B cell (primary cell): ENCODE measurements at regions of chr2 and their contacts with region 1.

Region 1: GRCh38 chr2:143162123-143162837 is 33.1 kb downstream of the ARHGAP15 start:
- DNase-seq: peak; percentile 77
- ATAC-seq: peak; percentile 90
- H3K4me3 ChIP-seq: no peak overlapping the region
- H3K4me3 Mint-ChIP-seq: no peak overlapping the region
- H3K27ac ChIP-seq: peak overlapping the region in 1 of 2 donors; percentile 42
- H3K27ac Mint-ChIP-seq: peak overlapping the region; percentile 28
- H3K4me1 ChIP-seq: peaks cover 45 to 56% of the 10 kb centered on the region in 2 donors
- H3K4me1 Mint-ChIP-seq: peaks cover 73% of the 10 kb centered on the region
- H3K27me3 ChIP-seq: no peaks in the 10 kb centered on the region
- H3K27me3 Mint-ChIP-seq: no peaks in the 10 kb centered on the region
- CTCF ChIP-seq: peak; percentile 78

Region 2: GRCh38 chr2:142254031-142254430 is 908.2 kb before region 1 on chr2:
- CTCF ChIA-PET with region 1: no interaction called
- POLR2A ChIA-PET with region 1: no interaction called
- intact Hi-C with region 1: no loop called
- DNase-seq: no peak
- ATAC-seq: no peak
- H3K4me3 ChIP-seq: no peak overlapping the region
- H3K4me3 Mint-ChIP-seq: no peak overlapping the region
- H3K27ac ChIP-seq: no peak overlapping the region
- H3K27ac Mint-ChIP-seq: no peak overlapping the region
- H3K4me1 ChIP-seq: no peaks in the 10 kb centered on the region
- H3K4me1 Mint-ChIP-seq: peaks cover 8% of the 10 kb centered on the region
- H3K27me3 ChIP-seq: peaks cover 0 to 4% (median 0%) of the 10 kb centered on the region in 4 experiments
- H3K27me3 Mint-ChIP-seq: no peaks in the 10 kb centered on the region
- CTCF ChIP-seq: no peak

Region 3: DNA sequence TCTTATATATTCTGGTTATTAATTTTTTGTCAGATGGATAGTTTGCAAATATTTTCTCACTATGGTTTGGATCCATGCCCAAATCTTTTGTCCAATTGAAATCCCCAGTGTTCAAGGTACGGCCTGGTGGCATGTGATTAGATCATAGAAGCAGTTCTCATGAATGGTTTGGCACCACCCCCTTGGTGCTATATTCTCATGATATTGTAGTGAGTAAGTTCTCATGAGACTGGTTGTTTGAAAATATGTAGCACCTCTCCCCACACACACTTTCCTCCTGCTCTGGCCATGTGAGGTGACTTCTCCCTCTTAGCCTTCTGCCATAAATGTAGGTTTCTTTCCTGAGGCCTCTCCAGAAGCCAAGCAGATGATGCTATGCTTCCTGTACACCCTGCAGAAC is 392.5 kb before region 1 on chr2:
- CTCF ChIA-PET with region 1: no interaction called
- POLR2A ChIA-PET with region 1: no interaction called
- intact Hi-C with region 1: no loop called
- DNase-seq: no peak
- ATAC-seq: no peak
- H3K4me3 ChIP-seq: no peak overlapping the region
- H3K4me3 Mint-ChIP-seq: no peak overlapping the region
- H3K27ac ChIP-seq: no peak overlapping the region
- H3K27ac Mint-ChIP-seq: no peak overlapping the region
- H3K4me1 ChIP-seq: no peaks in the 10 kb centered on the region
- H3K4me1 Mint-ChIP-seq: no peaks in the 10 kb centered on the region
- H3K27me3 ChIP-seq: no peaks in the 10 kb centered on the region
- H3K27me3 Mint-ChIP-seq: no peaks in the 10 kb centered on the region
- CTCF ChIP-seq: no peak

Region 4: GRCh38 chr2:143110758-143111428 is 51.4 kb before region 1 on chr2:
- CTCF ChIA-PET with region 1: interaction called, 196 read pairs
- POLR2A ChIA-PET with region 1: no interaction called
- intact Hi-C with region 1: loop called (anchors 1 kb)
- DNase-seq: peak; percentile 84
- ATAC-seq: peak; percentile 86
- H3K4me3 ChIP-seq: no peak overlapping the region
- H3K4me3 Mint-ChIP-seq: no peak overlapping the region
- H3K27ac ChIP-seq: no peak overlapping the region
- H3K27ac Mint-ChIP-seq: peak overlapping the region; percentile 76
- H3K4me1 ChIP-seq: peaks cover 4 to 6% of the 10 kb centered on the region in 2 donors
- H3K4me1 Mint-ChIP-seq: peaks cover 6% of the 10 kb centered on the region
- H3K27me3 ChIP-seq: no peaks in the 10 kb centered on the region
- H3K27me3 Mint-ChIP-seq: no peaks in the 10 kb centered on the region
- CTCF ChIP-seq: peak; percentile 98

Region 5: DNA sequence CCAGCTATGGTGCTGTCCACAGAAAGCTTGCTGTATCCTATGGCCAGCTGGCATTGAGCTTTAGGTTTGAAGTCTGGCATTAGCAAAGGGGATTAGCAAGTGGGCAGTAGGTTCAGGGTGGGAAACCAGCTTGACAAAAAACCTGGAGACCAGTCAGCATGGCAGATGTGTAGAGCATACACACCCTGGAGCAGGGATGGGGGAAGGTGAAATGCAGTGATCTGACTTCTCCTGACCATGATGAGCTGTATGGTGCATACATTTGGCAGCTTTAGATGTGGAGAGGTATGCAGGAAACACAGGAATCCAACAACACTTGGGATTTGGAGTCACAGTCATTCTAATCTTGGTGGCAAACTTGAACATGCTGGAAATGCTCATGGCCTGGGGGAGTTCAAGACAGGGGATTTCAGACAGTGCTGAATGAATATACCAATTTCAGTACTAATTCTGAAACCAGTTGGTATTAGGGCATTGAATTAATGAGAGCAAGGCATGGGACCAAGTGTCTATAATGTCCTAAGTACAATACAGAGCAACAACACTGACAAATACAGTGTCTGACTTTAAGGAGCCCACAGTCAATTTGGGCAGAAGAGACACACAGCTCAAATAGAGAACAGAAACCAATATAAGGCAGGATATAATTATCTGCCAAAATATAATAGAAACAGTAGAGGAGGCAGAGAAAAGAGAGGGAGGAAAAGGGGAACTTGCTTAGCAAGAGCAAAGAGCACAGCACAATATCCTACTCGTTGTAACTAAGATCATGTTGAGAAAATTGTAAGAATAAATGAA is 21.2 kb before region 1 on chr2:
- CTCF ChIA-PET with region 1: interaction called, 18 read pairs
- POLR2A ChIA-PET with region 1: no interaction called
- intact Hi-C with region 1: no loop called
- DNase-seq: peak; percentile 75
- ATAC-seq: peak; percentile 90
- H3K4me3 ChIP-seq: peak overlapping the region in 4 of 5 experiments; percentile 1 to 54 (median 6)
- H3K4me3 Mint-ChIP-seq: peak overlapping the region; percentile 63
- H3K27ac ChIP-seq: peak overlapping the region; percentile 58 to 80
- H3K27ac Mint-ChIP-seq: peak overlapping the region; percentile 88
- H3K4me1 ChIP-seq: peaks cover 59 to 81% of the 10 kb centered on the region in 2 donors
- H3K4me1 Mint-ChIP-seq: peaks cover 88% of the 10 kb centered on the region
- H3K27me3 ChIP-seq: no peaks in the 10 kb centered on the region
- H3K27me3 Mint-ChIP-seq: no peaks in the 10 kb centered on the region
- CTCF ChIP-seq: no peak

Region 6: DNA sequence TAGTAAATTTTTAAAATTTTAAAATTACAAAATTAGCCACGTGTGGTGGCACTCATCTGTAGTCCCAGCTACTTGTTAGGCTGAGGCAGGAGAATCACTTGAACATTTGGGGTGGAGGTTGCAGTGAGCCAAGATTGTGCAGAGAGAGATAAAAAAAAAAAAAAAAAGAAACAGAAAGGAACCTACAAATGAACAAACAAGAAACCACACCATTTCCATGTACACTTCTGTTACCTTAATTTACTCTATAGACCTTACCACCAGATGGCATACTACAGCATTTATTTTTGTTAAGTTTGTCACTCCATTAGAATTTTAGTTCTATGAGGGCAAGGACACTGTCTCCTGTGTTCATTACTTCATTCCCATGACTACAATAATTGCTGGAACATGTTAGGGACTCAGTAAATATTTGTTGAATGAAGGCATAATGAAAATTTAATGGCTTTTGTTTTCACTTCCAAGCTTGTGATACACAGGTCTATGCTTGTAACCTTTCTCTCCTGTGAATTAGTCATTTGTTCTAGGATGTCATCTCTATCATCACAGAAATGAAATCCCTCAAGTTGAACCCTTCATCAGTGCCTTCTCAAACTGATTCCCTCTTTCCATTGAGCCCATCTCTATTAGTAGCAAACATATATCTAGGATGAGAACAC is 43.0 kb after region 1 on chr2:
- CTCF ChIA-PET with region 1: interaction called, 12 read pairs
- POLR2A ChIA-PET with region 1: no interaction called
- intact Hi-C with region 1: no loop called
- DNase-seq: peak; percentile 55
- ATAC-seq: peak; percentile 39
- H3K4me3 ChIP-seq: no peak overlapping the region
- H3K4me3 Mint-ChIP-seq: no peak overlapping the region
- H3K27ac ChIP-seq: peak overlapping the region in 1 of 2 donors; percentile 50
- H3K27ac Mint-ChIP-seq: peak overlapping the region; percentile 16
- H3K4me1 ChIP-seq: peaks cover 10 to 17% of the 10 kb centered on the region in 2 donors
- H3K4me1 Mint-ChIP-seq: peaks cover 29% of the 10 kb centered on the region
- H3K27me3 ChIP-seq: no peaks in the 10 kb centered on the region
- H3K27me3 Mint-ChIP-seq: no peaks in the 10 kb centered on the region
- CTCF ChIP-seq: peak; percentile 56

Region 7: DNA sequence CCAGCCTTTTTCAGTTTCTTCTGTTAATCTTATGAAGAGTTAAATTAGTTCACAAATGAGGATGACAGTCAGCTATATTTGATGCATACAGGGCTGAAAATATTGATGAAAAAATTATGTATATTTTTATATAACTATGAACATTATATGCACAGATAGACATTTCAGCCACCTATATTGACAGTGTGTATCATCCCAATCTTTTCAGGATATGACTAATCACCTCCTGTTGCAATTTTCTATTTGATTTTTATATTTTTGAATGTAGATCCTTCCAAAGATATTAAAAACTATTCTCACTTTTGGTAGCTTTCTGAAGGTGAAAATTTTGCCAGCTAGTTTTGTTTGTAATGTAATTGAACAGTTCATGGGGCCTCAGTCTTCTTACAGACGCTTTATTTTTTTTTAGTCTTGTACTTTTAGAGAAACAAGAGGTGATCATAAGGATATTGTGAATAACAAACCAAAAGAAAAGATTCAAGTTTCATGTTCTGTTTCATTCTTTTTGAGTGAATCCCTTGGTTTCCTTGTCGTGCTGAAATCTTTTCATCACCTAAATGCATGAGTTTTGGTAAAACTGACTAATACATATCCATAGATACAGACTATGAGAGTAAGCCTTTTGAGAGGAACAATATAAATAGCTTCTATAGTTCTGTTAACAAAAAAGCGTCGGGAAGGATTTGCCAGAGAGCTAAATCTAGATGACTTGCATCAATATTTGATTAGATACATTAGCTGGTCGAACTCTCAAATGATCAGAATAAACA is 90.0 kb after region 1 on chr2:
- CTCF ChIA-PET with region 1: interaction called, 165 read pairs
- POLR2A ChIA-PET with region 1: no interaction called
- intact Hi-C with region 1: no loop called
- DNase-seq: no peak
- ATAC-seq: no peak
- H3K4me3 ChIP-seq: no peak overlapping the region
- H3K4me3 Mint-ChIP-seq: no peak overlapping the region
- H3K27ac ChIP-seq: peak overlapping the region in 1 of 2 donors; percentile 68
- H3K27ac Mint-ChIP-seq: peak overlapping the region; percentile 47
- H3K4me1 ChIP-seq: peaks cover 20 to 40% of the 10 kb centered on the region in 2 donors
- H3K4me1 Mint-ChIP-seq: peaks cover 56% of the 10 kb centered on the region
- H3K27me3 ChIP-seq: no peaks in the 10 kb centered on the region
- H3K27me3 Mint-ChIP-seq: no peaks in the 10 kb centered on the region
- CTCF ChIP-seq: no peak

Region 8: GRCh38 chr2:143382573-143382972 is 220.3 kb after region 1 on chr2:
- CTCF ChIA-PET with region 1: no interaction called
- POLR2A ChIA-PET with region 1: no interaction called
- intact Hi-C with region 1: no loop called
- DNase-seq: no peak
- ATAC-seq: no peak
- H3K4me3 ChIP-seq: no peak overlapping the region
- H3K4me3 Mint-ChIP-seq: no peak overlapping the region
- H3K27ac ChIP-seq: no peak overlapping the region
- H3K27ac Mint-ChIP-seq: no peak overlapping the region
- H3K4me1 ChIP-seq: no peaks in the 10 kb centered on the region
- H3K4me1 Mint-ChIP-seq: peaks cover 7% of the 10 kb centered on the region
- H3K27me3 ChIP-seq: no peaks in the 10 kb centered on the region
- H3K27me3 Mint-ChIP-seq: no peaks in the 10 kb centered on the region
- CTCF ChIP-seq: no peak